ENCODE measurements at regions of chr5 and their contacts with region 1.

Region 1: DNA sequence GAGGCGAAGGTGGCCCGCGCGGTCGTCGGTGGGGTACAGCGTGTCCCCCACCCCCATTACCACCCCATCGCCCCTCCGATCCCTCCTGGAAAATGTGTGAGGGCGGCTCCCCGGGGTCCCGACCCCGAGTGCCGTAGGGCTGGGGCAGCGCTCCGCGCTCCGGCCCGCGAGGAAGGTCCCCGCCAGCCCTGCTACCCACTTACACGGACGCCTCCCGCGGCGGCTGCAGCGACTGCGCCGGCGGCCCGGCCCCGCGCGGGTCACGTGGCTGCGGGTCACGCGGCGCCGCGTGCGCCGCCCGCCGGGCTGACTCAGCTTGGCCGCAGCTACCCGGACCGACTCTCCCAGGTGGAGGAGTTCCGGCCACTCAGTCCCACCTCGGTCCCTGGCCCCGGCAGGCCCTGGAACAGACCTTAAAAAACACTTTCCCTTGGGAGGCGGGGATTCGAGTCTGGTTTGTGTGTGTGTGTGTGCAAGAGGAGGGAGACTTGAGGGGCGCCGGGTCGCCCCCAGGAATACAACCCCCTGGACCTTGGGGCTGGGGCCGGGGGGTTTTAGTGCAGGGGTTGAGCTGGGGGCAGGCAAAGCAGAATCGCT is at the start of gene GNPDA1:
- DNase-seq: peak; percentile 81
- H3K4me3 Mint-ChIP-seq: peak within 1 kb of the TSS; percentile 89
- H3K27ac Mint-ChIP-seq: peak within 1 kb of the TSS; percentile 98
- H3K4me1 Mint-ChIP-seq: peaks cover 69% of the 10 kb centered on the region
- H3K27me3 Mint-ChIP-seq: no peaks in the 10 kb centered on the region
- total RNA-seq, gene GNPDA1: 55.8 to 56.6 TPM

Region 2: DNA sequence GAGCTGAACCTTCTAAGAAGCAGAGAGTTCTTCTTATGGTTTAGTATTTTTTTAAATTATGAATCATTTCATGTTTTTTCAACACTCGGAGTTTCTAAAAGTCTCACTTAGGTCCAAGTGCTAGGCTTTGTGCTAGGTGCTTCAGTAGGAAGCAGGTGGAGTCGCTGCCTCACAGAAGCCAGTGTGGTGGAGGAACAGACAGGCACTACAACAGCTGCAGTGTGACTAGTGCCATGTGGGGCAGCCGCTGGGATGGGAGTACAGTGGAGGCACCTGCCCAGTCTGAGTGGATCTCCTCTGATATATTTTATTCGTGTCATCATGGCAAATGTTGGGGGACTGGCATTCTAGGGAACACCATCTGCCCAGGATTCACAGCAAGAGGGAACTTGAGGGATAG is 508.7 kb before region 1 on chr5:
- CTCF ChIA-PET with region 1: no interaction called
- POLR2A ChIA-PET with region 1: no interaction called
- intact Hi-C with region 1: no loop called
- DNase-seq: no peak
- H3K4me3 Mint-ChIP-seq: no peak overlapping the region
- H3K27ac Mint-ChIP-seq: no peak overlapping the region
- H3K4me1 Mint-ChIP-seq: peaks cover 2% of the 10 kb centered on the region
- H3K27me3 Mint-ChIP-seq: no peaks in the 10 kb centered on the region

Region 3: GRCh38 chr5:141968914-141969608 is 43.8 kb before region 1 on chr5 and contains the start of gene RNF14:
- CTCF ChIA-PET with region 1: interaction called, 36 read pairs
- POLR2A ChIA-PET with region 1: interaction called, 18 read pairs
- intact Hi-C with region 1: loop called (anchors 1 kb)
- DNase-seq: peak; percentile 97
- H3K4me3 Mint-ChIP-seq: peak within 1 kb of the TSS; percentile 97
- H3K27ac Mint-ChIP-seq: peak within 1 kb of the TSS; percentile 96
- H3K4me1 Mint-ChIP-seq: peaks cover 28% of the 10 kb centered on the region
- H3K27me3 Mint-ChIP-seq: no peaks in the 10 kb centered on the region
- total RNA-seq, gene RNF14: 34.6 to 39.5 TPM

Region 4: DNA sequence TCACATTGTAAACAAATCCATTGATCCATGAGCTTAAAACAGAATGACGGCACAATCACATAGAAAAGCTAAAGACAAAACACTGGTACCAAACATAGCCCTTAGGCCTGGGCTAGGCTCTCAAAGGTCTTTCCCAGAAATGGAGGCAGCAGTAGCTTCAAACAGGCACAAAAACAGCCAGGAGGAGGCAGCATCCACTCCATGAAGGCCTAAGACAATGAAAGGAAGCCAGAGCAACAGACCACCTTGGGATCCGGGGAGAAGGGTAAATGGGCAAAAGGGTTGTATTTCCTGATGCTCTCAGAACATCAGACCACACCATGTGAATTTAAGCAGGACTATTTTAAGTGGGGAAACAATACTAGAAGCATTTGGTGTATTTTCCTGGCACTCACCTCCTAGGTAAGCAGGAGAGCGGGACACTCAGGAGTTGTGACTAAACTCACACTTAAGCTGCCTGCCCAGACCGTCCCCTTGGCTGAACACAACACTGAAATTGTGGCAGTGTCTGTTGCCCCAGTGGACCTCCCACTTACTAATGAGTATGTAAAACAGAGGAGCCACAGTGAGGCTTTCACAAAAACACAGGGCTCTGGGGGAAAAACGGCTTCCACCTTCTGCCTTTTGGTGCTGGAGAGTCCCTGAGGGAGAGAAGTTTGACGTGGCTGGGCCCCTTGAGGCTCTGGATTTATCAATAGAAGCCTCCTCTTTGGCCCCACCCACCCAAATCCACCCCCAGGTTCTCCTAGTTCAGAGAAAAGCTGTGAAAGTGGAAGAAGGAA is 12.0 kb before region 1 on chr5:
- CTCF ChIA-PET with region 1: interaction called, 16 read pairs
- POLR2A ChIA-PET with region 1: interaction called, 3 read pairs
- intact Hi-C with region 1: loop called (anchors 2 kb)
- DNase-seq: peak; percentile 43
- H3K4me3 Mint-ChIP-seq: no peak overlapping the region
- H3K27ac Mint-ChIP-seq: peak overlapping the region; percentile 84
- H3K4me1 Mint-ChIP-seq: peaks cover 21% of the 10 kb centered on the region
- H3K27me3 Mint-ChIP-seq: no peaks in the 10 kb centered on the region

Region 5: GRCh38 chr5:142034994-142035393 is 22.1 kb after region 1 on chr5:
- CTCF ChIA-PET with region 1: no interaction called
- POLR2A ChIA-PET with region 1: no interaction called
- intact Hi-C with region 1: no loop called
- DNase-seq: no peak
- H3K4me3 Mint-ChIP-seq: no peak overlapping the region
- H3K27ac Mint-ChIP-seq: no peak overlapping the region
- H3K4me1 Mint-ChIP-seq: peaks cover 13% of the 10 kb centered on the region
- H3K27me3 Mint-ChIP-seq: no peaks in the 10 kb centered on the region

Region 6: GRCh38 chr5:142073362-142073988 is 60.6 kb after region 1 on chr5:
- CTCF ChIA-PET with region 1: interaction called, 6 read pairs
- POLR2A ChIA-PET with region 1: interaction called, 8 read pairs
- intact Hi-C with region 1: loop called (anchors 1 kb)
- DNase-seq: no peak
- H3K4me3 Mint-ChIP-seq: no peak overlapping the region
- H3K27ac Mint-ChIP-seq: peak overlapping the region; percentile 56
- H3K4me1 Mint-ChIP-seq: peaks cover 30% of the 10 kb centered on the region
- H3K27me3 Mint-ChIP-seq: no peaks in the 10 kb centered on the region

Region 7: DNA sequence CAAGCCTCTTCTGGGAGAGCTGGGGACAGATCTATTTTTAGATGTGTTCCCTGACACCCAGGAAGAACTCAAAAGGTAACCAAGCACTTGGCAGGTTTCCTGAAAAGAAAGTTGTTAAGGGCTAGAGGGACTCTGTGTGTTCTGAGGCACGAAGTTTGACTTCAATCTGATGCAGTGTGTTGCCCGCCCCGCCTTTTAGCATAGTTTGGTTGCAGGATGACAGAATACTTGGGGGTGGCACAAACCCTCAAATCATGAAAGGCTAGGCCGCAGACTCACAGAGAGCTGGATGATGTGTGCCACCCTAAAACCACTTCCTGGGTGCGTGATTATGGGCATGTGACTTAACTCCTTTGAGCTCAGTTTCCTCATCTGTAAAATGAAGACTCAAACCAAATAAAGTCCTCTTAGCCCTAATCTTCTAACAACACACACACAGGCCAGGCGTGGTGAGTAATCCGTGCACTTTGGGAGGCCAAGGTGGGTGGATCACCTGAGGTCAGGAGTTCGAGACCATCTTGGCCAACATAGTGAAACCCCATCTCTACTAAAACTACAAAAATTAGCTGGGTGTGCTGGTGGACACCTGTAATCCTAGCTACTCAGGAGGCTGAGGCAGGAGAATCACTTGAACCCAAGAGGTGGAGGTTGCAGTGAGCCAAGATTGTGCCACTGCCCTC is 82.9 kb after region 1 on chr5:
- CTCF ChIA-PET with region 1: interaction called, 20 read pairs
- POLR2A ChIA-PET with region 1: interaction called, 50 read pairs
- intact Hi-C with region 1: loop called (anchors 1 kb)
- DNase-seq: peak; percentile 93
- H3K4me3 Mint-ChIP-seq: peak overlapping the region; percentile 48
- H3K27ac Mint-ChIP-seq: peak overlapping the region; percentile 95
- H3K4me1 Mint-ChIP-seq: peaks cover 63% of the 10 kb centered on the region
- H3K27me3 Mint-ChIP-seq: no peaks in the 10 kb centered on the region

Region 8: DNA sequence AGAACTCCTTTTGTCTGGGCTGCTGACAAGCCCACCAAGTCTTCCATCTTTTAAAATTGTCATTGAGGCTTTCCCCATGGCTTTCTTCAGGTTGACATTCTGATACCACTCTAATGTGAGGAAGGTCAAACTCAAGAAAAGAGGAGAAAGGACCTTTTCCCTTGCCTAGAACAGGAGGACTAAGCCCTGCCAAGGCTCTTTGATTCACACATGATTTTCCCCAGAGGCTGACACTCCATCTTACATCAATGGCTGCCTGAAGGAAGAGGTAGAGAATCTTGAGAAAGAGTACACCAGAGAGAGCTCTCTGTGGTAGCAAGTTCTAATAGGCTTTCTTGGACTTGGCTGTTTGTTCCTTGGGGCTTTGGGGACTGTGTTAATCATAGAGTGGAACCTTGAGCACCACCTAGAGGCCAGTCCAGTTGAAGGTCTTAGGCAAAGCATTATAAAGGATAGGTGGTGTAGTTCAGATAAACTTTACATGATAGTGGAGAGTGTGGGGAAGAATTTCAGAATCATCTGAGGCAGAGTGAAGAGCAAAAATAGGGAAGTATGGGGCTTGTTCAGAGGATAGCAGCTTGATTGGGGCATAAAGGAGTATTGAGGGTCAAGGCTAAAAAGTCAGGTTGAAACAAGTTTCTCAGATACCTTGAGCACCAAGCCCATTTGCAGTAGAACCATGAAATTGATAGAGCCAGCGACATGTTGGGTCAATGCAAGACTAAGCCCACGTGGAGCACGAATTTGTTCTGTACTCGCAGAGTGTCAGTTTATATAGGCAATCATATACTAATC is 132.4 kb after region 1 on chr5:
- CTCF ChIA-PET with region 1: interaction called, 197 read pairs
- POLR2A ChIA-PET with region 1: interaction called, 5 read pairs
- intact Hi-C with region 1: loop called (anchors 1 kb)
- DNase-seq: peak; percentile 67
- H3K4me3 Mint-ChIP-seq: no peak overlapping the region
- H3K27ac Mint-ChIP-seq: no peak overlapping the region
- H3K4me1 Mint-ChIP-seq: peaks cover 2% of the 10 kb centered on the region
- H3K27me3 Mint-ChIP-seq: no peaks in the 10 kb centered on the region

Region 9: DNA sequence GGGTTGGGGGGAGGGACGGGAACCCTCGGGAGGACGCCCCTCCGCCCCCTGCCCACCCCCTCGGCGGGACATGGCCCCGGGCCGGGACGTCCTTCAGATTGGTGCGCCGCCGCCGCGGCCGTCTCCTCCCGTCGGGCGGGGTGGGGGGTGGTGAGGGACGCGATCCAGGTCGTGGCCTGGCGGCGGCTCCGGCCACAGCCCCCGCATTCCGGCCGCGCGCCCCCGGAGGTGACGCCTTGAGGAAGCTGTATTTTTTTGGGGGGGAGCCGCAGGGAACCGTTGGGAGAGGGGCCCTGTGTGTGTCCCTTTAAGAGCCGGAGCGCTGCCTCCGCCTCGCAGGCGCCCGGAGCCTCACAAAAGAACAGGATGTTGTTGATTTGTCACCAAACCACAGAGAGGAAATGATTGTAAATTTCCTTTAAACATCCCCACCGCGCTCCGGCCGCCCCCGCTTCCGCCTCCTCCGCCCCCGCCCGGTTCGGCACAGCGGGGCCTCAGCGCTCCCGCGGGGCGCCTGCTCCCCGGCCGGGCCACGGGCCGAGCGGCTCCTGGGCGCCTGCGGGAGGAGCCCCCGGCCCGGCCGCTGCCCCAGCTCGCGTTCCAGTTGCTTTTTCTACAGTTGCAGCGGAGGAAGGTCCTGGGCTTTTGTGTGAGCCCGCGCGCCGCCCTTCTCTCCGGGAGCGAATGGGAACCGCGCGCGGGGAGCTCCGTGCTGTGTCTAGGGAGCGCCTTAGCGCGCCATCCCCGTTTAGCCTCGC is 344.0 kb after region 1 on chr5:
- CTCF ChIA-PET with region 1: no interaction called
- POLR2A ChIA-PET with region 1: interaction called, 3 read pairs
- intact Hi-C with region 1: loop called (anchors 5 kb)
- DNase-seq: peak; percentile 95
- H3K4me3 Mint-ChIP-seq: peak overlapping the region; percentile 71
- H3K27ac Mint-ChIP-seq: peak overlapping the region; percentile 91
- H3K4me1 Mint-ChIP-seq: peaks cover 38% of the 10 kb centered on the region
- H3K27me3 Mint-ChIP-seq: no peaks in the 10 kb centered on the region

Measured in activated CD4-positive, alpha-beta memory T cell treated with anti-CD3 and anti-CD28 coated beads for 36 hours (primary cell).